Sigmoid colon (tissue), 7 donors: ENCODE measurements at regions of chr17 and their contacts with region 1.

Region 1: DNA sequence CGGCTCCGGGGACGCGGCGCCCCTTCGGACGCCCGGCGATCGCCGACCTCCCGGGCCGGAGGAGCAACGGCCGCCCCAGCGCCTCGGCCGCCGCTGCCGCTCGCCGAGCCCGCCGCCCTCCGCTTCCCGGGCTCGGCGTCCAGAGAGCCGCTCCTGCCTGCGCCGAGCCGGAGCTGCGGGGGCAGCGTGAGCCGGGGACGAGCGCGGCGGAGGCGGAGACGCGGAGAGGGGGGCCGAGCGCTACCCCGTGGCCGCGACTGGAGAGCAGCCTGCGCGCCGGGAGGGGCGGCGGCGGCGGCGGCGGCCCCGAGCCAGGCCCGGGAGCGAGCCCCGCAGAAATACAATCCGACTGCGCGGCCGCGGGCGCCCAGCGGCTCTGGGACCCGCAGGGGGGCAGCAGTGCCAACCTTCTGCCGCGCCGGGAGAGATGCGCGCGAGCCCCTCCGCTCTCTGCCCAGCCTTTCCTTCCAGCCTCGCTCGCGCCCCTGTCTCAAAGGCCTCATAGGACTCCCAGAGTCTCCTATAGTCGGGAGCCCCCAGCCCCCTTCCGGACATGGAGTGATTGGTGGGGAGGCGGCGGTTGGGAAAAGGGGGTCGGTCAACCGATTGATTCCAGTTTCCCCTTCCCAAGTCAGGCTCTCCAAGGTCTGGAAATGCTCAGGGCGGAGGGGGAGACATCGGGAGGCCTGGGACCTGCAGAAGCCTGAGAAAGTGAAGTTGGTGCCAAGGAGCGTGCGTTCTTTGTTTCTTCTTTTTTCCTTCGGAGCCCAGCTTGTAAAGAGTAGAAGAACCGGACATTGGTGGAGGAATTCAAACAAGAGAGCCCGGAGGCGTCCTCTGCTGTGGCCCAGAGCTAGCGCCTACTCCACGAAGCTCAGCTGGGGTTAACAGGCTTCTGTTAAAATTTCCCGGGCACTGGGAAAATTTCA is 1.1 kb upstream of the SDK2 start:
- DNase-seq: no peak
- H3K4me3 ChIP-seq: peak overlapping the region in 3 of 4 donors; percentile 45 to 54 (median 48)
- H3K27ac ChIP-seq: peak overlapping the region in 3 of 4 donors; percentile 24 to 36 (median 32)
- H3K4me1 ChIP-seq: peaks cover 0 to 32% (median 30%) of the 10 kb centered on the region in 4 donors
- H3K27me3 ChIP-seq: peaks cover 11 to 91% (median 48%) of the 10 kb centered on the region in 3 donors
- CTCF ChIP-seq: no peak
- EP300 ChIP-seq: no peak
- POLR2A ChIP-seq: no peak

Region 2: GRCh38 chr17:74176546-74177001 is 531.3 kb after region 1 on chr17:
- intact Hi-C with region 1: loop called (anchors 5 kb)
- DNase-seq: no peak
- H3K4me3 ChIP-seq: no peak overlapping the region
- H3K27ac ChIP-seq: no peak overlapping the region
- H3K4me1 ChIP-seq: no peaks in the 10 kb centered on the region
- H3K27me3 ChIP-seq: peaks cover 8 to 39% (median 16%) of the 10 kb centered on the region in 3 donors
- CTCF ChIP-seq: peak; percentile 54 to 76 (median 68)
- EP300 ChIP-seq: no peak
- POLR2A ChIP-seq: no peak